Mammary epithelial cell (primary cell): ENCODE measurements at regions of chr11 and their contacts with region 1.

Region 1: DNA sequence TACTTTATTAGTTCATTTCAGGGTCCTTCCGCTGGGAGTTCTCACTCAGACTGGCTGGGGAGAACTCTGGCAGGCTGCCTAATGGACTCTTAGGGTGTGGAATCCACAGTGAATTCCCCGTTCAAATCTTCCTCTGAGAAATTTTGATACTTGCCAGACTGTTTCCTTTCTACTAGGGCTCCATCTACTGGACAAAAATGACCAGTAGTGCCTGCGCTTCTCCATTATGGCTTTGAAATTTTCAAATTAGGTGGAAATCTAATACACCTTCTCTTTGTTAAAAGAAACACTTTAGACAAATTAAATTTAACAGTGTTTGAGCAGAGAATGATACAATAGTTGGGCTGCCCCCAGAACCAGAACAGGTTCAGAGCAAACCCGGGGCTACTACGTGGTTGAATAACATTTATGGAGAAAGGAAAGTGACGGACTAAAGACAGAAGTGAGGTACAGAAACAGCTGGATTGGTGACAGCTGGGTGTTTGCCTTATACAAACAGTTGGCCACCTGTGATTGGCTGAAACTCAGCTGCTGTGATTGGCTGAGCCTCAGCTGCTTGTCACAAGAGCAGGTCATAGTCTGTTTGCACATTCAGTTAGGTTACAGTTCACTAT is 52.9 kb upstream of the FDX1 start:
- DNase-seq: peak; percentile 79
- H3K4me3 ChIP-seq: peak overlapping the region; percentile 26 to 48 (median 40)
- H3K27ac ChIP-seq: no peak overlapping the region
- H3K4me1 ChIP-seq: peaks cover 14% of the 10 kb centered on the region
- H3K27me3 ChIP-seq: no peaks in the 10 kb centered on the region
- CTCF ChIP-seq: peak; percentile 72 to 82

Region 2: GRCh38 chr11:109853156-109853776 is 523.6 kb before region 1 on chr11:
- CTCF ChIA-PET with region 1: no interaction called
- dilution Hi-C with region 1: no loop called
- in situ Hi-C with region 1: no loop called
- intact Hi-C with region 1: loop called (anchors 5 kb)
- DNase-seq: peak; percentile 63
- H3K4me3 ChIP-seq: no peak overlapping the region
- H3K27ac ChIP-seq: no peak overlapping the region
- H3K4me1 ChIP-seq: peaks cover 4% of the 10 kb centered on the region
- H3K27me3 ChIP-seq: no peaks in the 10 kb centered on the region
- CTCF ChIP-seq: peak; percentile 79 to 87

Region 3: DNA sequence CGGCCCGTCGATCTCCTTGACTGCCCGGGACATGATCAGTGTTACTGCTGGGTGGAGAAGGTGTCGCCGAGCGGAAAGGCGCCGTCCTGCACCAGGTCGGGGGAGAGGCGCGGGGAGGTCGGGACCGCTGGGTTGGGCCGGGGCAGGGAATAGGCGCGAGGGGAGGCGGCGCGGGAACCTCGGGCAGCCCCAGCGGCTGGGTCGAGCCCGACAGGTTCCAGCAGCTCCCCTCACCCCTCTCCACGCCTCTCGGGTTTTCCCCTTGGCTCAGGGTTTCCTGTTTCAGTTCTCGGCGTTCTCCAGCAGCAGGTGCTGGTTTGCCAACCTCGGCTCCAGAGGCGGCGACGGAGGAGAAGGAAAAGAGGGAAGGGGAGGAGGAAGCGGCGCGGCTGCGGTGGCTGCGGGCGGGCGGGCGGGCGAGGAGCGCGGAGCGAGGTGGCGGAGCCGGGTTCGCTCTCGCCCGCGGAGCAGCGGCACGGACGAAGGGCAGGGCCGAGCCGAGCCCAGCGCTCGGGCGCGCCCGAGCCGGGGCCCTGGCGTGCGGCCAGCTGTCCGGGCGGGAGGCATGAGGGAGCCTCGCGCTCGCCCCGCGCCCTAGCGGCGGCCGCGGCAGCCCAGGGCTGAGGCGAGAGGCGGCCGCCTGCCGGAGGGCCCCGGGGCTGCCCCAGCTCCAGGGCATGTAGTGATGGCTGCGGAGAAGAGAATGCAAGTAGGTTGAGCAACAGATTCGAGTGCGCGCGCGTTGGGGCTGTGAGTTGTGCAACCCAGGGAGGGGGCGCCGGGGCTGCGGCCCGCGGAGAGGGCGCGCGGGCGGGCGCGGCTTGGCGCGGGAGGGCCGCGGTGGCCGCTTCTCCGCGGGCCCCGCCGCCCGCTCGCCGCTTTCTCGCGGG is 284.1 kb before region 1 on chr11 and contains the start of gene ZC3H12C:
- CTCF ChIA-PET with region 1: no interaction called
- dilution Hi-C with region 1: no loop called
- in situ Hi-C with region 1: no loop called
- intact Hi-C with region 1: loop called (anchors 5 kb)
- DNase-seq: peak; percentile 95
- H3K4me3 ChIP-seq: peak within 1 kb of the TSS; percentile 73 to 87 (median 74)
- H3K27ac ChIP-seq: peak within 1 kb of the TSS; percentile 90
- H3K4me1 ChIP-seq: peaks cover 39% of the 10 kb centered on the region
- H3K27me3 ChIP-seq: no peaks in the 10 kb centered on the region
- CTCF ChIP-seq: peak; percentile 8 to 62
- total RNA-seq, gene ZC3H12C: 16.0 to 26.9 TPM

Region 4: GRCh38 chr11:110417727-110418126 is 40.9 kb after region 1 on chr11:
- CTCF ChIA-PET with region 1: no interaction called
- dilution Hi-C with region 1: no loop called
- in situ Hi-C with region 1: no loop called
- intact Hi-C with region 1: no loop called
- DNase-seq: no peak
- H3K4me3 ChIP-seq: no peak overlapping the region
- H3K27ac ChIP-seq: no peak overlapping the region
- H3K4me1 ChIP-seq: no peaks in the 10 kb centered on the region
- H3K27me3 ChIP-seq: peaks cover 2% of the 10 kb centered on the region
- CTCF ChIP-seq: no peak

Region 5: GRCh38 chr11:110430267-110431050 is 53.6 kb after region 1 on chr11:
- CTCF ChIA-PET with region 1: no interaction called
- dilution Hi-C with region 1: no loop called
- in situ Hi-C with region 1: no loop called
- intact Hi-C with region 1: loop called (anchors 1 kb)
- DNase-seq: peak; percentile 74
- H3K4me3 ChIP-seq: peak overlapping the region; percentile 60 to 93 (median 90)
- H3K27ac ChIP-seq: peak overlapping the region; percentile 67
- H3K4me1 ChIP-seq: peaks cover 17% of the 10 kb centered on the region
- H3K27me3 ChIP-seq: no peaks in the 10 kb centered on the region
- CTCF ChIP-seq: no peak

Region 6: GRCh38 chr11:110712659-110713448 is 336.0 kb after region 1 on chr11:
- CTCF ChIA-PET with region 1: no interaction called
- dilution Hi-C with region 1: no loop called
- in situ Hi-C with region 1: no loop called
- intact Hi-C with region 1: no loop called
- DNase-seq: peak; percentile 14
- H3K4me3 ChIP-seq: peak overlapping the region in 2 of 3 experiments; percentile 2 to 4
- H3K27ac ChIP-seq: no peak overlapping the region
- H3K4me1 ChIP-seq: peaks cover 14% of the 10 kb centered on the region
- H3K27me3 ChIP-seq: peaks cover 56% of the 10 kb centered on the region
- CTCF ChIP-seq: peak in 1 of 2 donors; percentile 29